MCF 10A (cell line): ENCODE measurements at regions of chr1 and their contacts with region 1.

Region 1: GRCh38 chr1:230000493-230001184 is 66.4 kb upstream of the GALNT2 start:
- DNase-seq: no peak
- H3K4me3 Mint-ChIP-seq: no peak overlapping the region
- H3K27ac Mint-ChIP-seq: no peak overlapping the region
- H3K4me1 Mint-ChIP-seq: peaks cover 10% of the 10 kb centered on the region
- H3K27me3 Mint-ChIP-seq: no peaks in the 10 kb centered on the region
- CTCF ChIP-seq: no peak

Region 2: GRCh38 chr1:229989591-229990248 is 10.9 kb before region 1 on chr1:
- CTCF ChIA-PET with region 1: interaction called, 10 read pairs
- POLR2A ChIA-PET with region 1: interaction called, 3 read pairs
- intact Hi-C with region 1: no loop called
- DNase-seq: no peak
- H3K4me3 Mint-ChIP-seq: no peak overlapping the region
- H3K27ac Mint-ChIP-seq: no peak overlapping the region
- H3K4me1 Mint-ChIP-seq: no peaks in the 10 kb centered on the region
- H3K27me3 Mint-ChIP-seq: peaks cover 14% of the 10 kb centered on the region
- CTCF ChIP-seq: no peak